Astrocyte of the cerebellum (primary cell): ENCODE measurements at regions of chr1 and their contacts with region 1.

Region 1: GRCh38 chr1:203057911-203058675 is 27.7 kb downstream of the MYOG start:
- DNase-seq: no peak
- H3K4me3 ChIP-seq: no peak overlapping the region
- CTCF ChIP-seq: no peak

Region 2: DNA sequence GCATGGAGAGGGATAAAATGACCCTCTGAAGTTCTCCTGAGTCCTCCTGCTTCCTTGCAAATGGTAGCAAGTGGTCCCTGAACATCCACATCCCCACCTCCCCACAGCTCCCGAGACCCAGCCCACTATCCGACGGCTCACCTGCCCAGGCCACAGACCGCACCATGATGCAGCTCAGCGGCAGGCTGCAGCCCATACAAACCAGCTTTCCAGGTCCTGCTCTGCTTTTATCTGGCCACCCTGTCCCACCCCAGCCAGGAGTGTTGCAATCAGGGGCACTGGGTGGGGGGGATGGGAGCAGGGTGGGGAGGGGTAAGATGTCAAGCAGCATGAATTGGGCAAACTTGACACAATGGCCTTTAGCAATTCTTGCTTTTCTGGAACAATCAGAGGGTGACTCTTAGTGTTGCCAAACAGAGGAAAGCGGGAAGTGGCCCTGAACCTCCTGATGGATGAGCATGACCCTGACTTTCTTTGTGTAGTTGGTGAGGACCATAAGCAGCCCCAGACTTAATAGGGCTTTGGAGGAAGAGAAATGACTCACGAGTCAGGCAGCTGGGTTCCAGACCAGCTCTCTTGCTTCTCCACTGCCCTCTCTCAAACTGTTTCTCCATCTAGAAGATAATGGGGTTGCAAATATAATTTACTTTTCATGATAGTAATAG is 171.5 kb after region 1 on chr1 and contains the start of gene CHIT1:
- in situ Hi-C with region 1: loop called (anchors 5 kb)
- DNase-seq: no peak
- H3K4me3 ChIP-seq: no peak within 1 kb of the TSS
- CTCF ChIP-seq: no peak